ENCODE measurements at regions of chr5 and their contacts with region 1.

Region 1: DNA sequence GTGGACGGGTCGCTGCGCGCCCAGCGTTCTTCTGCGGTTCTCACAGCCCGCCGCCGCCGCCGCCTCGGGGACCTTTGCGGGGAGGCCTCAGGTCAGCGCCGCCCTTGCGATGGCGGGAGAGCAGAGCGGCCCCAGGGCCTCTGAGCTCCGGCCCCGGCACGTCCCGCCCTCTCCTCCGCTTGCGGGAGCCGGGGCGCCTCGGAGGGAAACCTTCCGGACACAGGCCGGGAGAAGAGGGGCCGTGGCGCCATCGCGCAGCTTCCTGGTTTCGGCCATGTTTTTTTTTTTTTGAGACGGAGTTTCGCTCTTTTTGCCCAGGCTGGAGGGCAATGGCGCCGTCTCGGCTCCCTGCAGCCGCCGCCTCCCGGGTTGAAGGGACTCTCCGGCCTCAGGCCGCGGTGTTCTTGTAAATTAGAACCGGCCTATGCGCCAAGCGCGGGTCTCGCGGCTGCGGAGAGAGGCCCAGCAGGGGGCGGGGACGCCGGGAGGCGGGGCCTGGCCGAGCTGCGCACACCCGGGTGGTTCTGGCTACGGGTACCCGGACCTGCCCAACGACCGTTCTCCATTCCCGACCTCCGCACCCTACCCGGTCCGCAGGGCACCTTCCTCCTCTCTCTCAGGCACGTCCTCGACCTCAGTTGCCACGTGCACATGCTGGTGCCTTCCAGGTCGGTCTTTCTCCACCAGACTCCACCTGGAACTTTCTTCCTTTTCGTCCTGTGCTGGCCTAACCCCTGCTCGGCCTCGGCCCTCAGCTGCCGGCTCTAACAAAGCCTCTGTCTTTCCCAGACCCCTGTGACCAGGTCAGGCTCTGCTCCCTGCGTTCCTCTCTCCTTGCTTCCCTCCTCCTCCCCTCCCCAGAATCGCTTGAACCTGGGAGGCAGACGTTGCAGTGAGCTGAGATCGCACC is 28.8 kb upstream of the MGAT1 start:
- DNase-seq: peak; percentile 81
- H3K4me3 Mint-ChIP-seq: peak overlapping the region; percentile 99
- H3K27ac Mint-ChIP-seq: peak overlapping the region; percentile 99
- H3K4me1 Mint-ChIP-seq: peaks cover 47% of the 10 kb centered on the region
- H3K27me3 Mint-ChIP-seq: peaks cover 4% of the 10 kb centered on the region

Region 2: DNA sequence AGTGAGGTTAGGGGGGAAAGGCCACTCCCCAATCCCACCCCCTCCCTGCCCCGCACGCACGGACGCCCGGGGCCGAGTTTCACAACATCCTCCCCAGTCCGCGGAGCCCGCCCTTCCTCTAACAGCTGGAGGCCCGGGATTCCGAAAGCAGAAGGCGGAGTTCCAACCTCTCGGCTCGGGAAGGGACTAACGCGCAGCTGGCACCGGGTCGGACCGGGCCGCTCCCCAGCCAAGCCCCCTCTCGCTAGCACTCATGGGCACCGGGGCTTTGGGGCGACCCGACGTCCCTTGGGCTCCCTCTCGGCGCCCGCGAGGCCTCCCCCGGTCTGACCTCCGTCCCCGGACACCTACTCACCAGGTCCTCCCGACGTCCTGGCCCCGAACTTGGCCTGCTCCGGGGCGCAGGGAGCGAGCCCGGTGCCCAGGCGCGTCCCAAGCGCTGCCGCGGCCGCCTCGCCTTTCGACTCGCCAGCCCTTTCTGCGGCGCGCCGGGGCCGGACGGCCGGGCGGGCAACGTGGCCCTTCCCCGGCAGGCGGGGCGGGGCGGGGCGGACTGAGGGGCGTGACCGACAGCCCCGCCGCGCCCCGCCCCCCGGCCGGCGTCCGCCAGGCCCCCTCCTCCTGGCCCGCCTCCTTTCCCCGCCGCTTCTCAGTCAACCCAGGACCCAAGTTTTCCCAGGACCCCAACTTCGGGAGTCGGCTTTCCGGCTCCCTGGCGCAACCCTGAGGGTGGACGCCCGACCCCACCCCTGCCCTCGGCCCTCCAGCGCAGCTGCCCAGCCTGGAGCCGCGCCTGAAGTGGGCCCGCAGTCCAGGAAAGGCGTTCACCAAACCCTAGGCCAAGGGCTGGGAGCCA is 28.8 kb before region 1 on chr5 and contains the start of gene MGAT1:
- CTCF ChIA-PET with region 1: interaction called, 11 read pairs
- DNase-seq: peak; percentile 84
- H3K4me3 Mint-ChIP-seq: peak within 1 kb of the TSS; percentile 77
- H3K27ac Mint-ChIP-seq: peak within 1 kb of the TSS; percentile 100
- H3K4me1 Mint-ChIP-seq: peaks cover 82% of the 10 kb centered on the region
- H3K27me3 Mint-ChIP-seq: no peaks in the 10 kb centered on the region

Region 3: DNA sequence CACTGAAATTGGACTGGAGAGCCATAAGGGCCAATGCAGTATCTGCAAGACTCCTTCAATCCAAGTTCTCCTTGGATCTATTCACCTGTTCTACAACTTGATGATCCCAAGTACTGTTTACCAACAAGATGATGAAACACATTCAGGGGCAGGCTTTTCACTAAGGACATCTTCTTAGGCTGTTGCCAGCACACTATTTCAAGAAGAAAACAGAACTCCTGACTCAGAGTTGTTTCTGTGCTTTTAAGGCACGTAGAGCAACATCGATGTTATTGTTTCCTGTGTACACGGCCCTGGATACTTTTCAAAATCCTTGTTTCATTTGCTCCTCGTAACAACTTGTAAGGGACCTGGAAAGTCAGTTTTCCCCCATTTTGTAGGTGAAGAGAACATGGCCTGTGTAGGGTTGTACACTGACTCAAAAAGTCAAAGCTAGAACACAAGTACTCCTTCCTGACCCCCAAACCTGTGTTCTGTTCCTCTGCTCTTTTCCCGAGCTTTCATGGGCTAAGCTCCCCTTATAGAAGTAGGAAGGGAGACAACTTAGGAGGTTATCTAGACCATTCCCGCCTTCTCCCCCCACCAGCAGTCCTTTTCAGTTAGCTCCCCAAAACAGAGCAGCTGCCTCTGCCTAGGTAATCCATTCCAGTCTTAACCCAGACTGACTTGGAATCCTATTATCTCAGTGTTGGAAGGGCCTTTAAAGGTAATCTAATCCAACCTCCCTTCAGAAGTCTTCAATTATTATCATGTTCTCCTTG is 23.6 kb before region 1 on chr5:
- CTCF ChIA-PET with region 1: interaction called, 11 read pairs
- DNase-seq: no peak
- H3K4me3 Mint-ChIP-seq: peak overlapping the region; percentile 77
- H3K27ac Mint-ChIP-seq: peak overlapping the region; percentile 100
- H3K4me1 Mint-ChIP-seq: peaks cover 66% of the 10 kb centered on the region
- H3K27me3 Mint-ChIP-seq: peaks cover 4% of the 10 kb centered on the region

Region 4: GRCh38 chr5:180848878-180849277 is 17.5 kb after region 1 on chr5:
- CTCF ChIA-PET with region 1: no interaction called
- DNase-seq: no peak
- H3K4me3 Mint-ChIP-seq: no peak overlapping the region
- H3K27ac Mint-ChIP-seq: no peak overlapping the region
- H3K4me1 Mint-ChIP-seq: no peaks in the 10 kb centered on the region
- H3K27me3 Mint-ChIP-seq: no peaks in the 10 kb centered on the region